ENCODE measurements at regions of chr12 and their contacts with region 1.

Region 1: DNA sequence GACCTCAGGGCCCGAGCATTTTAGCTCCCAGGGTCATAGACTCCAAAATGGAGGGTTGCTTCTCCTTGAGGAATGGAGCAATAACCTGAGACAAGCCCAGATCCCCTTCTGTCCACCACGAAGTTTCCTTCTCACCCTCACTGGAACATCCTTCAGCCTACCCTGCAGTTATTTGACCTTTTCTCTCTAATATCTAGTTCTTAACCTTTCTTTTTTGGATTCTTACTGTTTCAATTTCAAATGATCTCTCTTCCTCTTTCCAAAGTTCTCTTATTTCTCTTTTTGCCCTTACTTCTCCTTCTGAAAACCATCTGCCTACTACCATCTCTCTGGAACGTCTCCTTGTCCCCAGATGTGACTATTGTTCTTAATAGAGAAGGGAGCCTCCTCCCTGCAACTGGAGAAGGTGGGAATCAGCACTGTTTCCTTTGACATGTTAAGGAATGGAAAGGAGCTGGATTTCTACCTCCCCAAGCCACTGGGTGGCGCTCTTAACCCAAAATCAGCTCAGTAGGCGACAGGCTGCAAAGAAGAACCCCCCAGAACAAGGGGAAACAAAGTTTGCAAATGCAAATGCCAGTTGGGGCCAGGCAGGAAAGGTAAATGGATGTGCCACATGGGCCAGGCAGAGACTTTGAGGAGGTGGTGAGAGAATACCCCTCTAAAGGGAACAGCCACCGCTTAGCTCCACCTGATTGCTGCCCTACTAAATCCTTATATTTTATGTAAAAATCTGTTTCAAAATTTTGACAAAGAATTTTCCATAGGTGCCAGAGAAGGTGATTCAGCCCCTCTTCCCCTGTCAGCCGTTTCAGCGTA is 22.4 kb upstream of the PDE1B start:
- DNase-seq: peak; percentile 92
- ATAC-seq: peak; percentile 92
- H3K4me3 Mint-ChIP-seq: no peak overlapping the region
- H3K27ac Mint-ChIP-seq: no peak overlapping the region
- H3K4me1 Mint-ChIP-seq: peaks cover 12% of the 10 kb centered on the region
- H3K27me3 Mint-ChIP-seq: peaks cover 63% of the 10 kb centered on the region
- CTCF ChIP-seq: peak; percentile 90

Region 2: GRCh38 chr12:54541751-54542290 is 14.8 kb after region 1 on chr12:
- CTCF ChIA-PET with region 1: interaction called, 25 read pairs
- POLR2A ChIA-PET with region 1: interaction called, 3 read pairs
- DNase-seq: no peak
- ATAC-seq: no peak
- H3K4me3 Mint-ChIP-seq: no peak overlapping the region
- H3K27ac Mint-ChIP-seq: no peak overlapping the region
- H3K4me1 Mint-ChIP-seq: peaks cover 23% of the 10 kb centered on the region
- H3K27me3 Mint-ChIP-seq: peaks cover 63% of the 10 kb centered on the region
- CTCF ChIP-seq: no peak

Region 3: DNA sequence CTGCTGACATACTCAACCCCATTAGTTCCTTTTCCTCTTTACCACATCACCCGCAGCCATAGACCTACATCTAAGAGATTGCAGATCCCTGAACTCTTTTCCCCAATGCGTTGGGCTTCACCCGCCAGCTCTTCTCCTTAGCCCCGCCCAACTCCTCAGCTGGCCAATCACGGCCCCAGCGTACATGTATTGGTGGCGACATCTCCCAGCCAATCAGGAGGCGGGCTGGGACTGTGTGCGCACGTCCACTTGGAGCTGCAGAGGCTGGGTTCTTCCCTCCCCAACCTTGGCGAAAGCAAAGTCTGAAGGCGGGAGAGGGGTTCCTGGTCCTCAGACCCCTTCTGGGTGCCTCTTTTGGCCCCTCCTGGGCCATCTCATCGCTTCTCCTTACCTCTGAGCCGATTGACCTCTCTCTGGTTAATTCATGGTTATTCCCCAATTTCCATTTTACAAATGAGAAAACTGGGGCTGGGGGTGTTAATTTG is 33.4 kb after region 1 on chr12:
- CTCF ChIA-PET with region 1: interaction called, 57 read pairs
- POLR2A ChIA-PET with region 1: no interaction called
- DNase-seq: peak; percentile 91
- ATAC-seq: peak; percentile 97
- H3K4me3 Mint-ChIP-seq: peak overlapping the region; percentile 67
- H3K27ac Mint-ChIP-seq: no peak overlapping the region
- H3K4me1 Mint-ChIP-seq: peaks cover 31% of the 10 kb centered on the region
- H3K27me3 Mint-ChIP-seq: peaks cover 63% of the 10 kb centered on the region
- CTCF ChIP-seq: no peak

Region 4: GRCh38 chr12:54579696-54580333 is 52.8 kb after region 1 on chr12:
- CTCF ChIA-PET with region 1: interaction called, 134 read pairs
- POLR2A ChIA-PET with region 1: no interaction called
- DNase-seq: peak; percentile 96
- ATAC-seq: peak; percentile 96
- H3K4me3 Mint-ChIP-seq: no peak overlapping the region
- H3K27ac Mint-ChIP-seq: no peak overlapping the region
- H3K4me1 Mint-ChIP-seq: peaks cover 34% of the 10 kb centered on the region
- H3K27me3 Mint-ChIP-seq: peaks cover 39% of the 10 kb centered on the region
- CTCF ChIP-seq: peak; percentile 100

Region 5: GRCh38 chr12:54596526-54596946 is 69.5 kb after region 1 on chr12:
- CTCF ChIA-PET with region 1: interaction called, 37 read pairs
- POLR2A ChIA-PET with region 1: no interaction called
- DNase-seq: peak; percentile 86
- ATAC-seq: peak; percentile 94
- H3K4me3 Mint-ChIP-seq: no peak overlapping the region
- H3K27ac Mint-ChIP-seq: no peak overlapping the region
- H3K4me1 Mint-ChIP-seq: peaks cover 5% of the 10 kb centered on the region
- H3K27me3 Mint-ChIP-seq: peaks cover 82% of the 10 kb centered on the region
- CTCF ChIP-seq: peak; percentile 77

Region 6: DNA sequence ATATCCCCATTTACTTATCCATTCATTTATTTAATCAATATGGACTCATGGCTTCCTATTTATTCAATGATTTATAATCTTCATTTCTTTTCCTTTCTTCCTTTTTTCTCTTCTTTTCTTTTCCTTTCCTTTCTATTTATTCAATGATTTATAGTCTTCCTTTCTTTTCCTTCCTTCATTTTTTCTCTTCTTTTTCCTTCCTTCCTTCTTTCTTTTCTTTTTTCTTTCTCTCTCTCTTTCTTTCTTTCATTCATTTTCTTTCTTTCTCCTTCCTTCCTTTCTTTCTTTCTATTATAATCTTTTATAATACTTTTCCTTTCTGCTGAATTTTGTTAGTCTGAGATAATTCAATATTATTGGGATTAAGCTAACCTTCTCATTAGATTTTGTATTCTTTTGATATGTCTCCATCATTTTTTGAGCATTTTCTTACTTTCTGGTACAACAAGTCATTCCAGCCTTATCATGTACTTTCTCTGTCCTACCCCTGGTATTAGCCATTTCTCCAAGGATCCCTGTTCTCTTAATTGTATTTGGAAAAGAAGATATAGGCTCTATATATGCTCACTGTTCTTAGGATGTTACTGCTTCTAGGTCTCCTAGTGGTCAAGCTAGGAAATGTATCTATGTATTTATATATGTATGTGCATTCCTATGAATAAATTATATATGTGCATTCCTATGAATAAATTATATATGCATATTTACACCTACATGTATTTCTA is 95.6 kb after region 1 on chr12:
- CTCF ChIA-PET with region 1: interaction called, 10 read pairs
- POLR2A ChIA-PET with region 1: no interaction called
- DNase-seq: no peak
- ATAC-seq: no peak
- H3K4me3 Mint-ChIP-seq: no peak overlapping the region
- H3K27ac Mint-ChIP-seq: no peak overlapping the region
- H3K4me1 Mint-ChIP-seq: no peaks in the 10 kb centered on the region
- H3K27me3 Mint-ChIP-seq: peaks cover 54% of the 10 kb centered on the region
- CTCF ChIP-seq: no peak

Region 7: DNA sequence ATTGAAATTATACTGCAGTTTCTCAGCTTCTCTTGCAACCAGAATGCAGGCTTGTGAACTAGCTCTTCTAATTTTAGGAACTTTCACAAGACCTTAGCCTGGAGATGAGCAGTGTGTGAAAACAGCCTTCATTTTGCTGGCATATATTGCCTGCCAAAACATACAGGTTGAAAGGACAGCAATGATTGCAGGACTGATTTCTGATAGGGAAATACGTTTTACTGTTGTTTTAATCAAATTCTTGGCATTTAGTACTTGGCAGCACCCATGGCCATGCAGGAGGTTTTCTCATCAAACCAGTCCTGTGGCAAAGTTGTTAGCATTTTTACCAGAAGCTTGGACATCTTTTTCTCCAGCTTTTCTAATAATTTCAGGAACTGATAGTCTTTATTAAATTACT is 235.4 kb after region 1 on chr12:
- CTCF ChIA-PET with region 1: no interaction called
- POLR2A ChIA-PET with region 1: no interaction called
- DNase-seq: no peak
- ATAC-seq: no peak
- H3K4me3 Mint-ChIP-seq: no peak overlapping the region
- H3K27ac Mint-ChIP-seq: no peak overlapping the region
- H3K4me1 Mint-ChIP-seq: no peaks in the 10 kb centered on the region
- H3K27me3 Mint-ChIP-seq: no peaks in the 10 kb centered on the region
- CTCF ChIP-seq: no peak